ENCODE measurements at regions of chr2 and their contacts with region 1.

Region 1: GRCh38 chr2:174248187-174248997 is at the start of gene OLA1:
- DNase-seq: peak; percentile 89 to 98 (median 95)
- ATAC-seq: peak; percentile 97
- H3K4me3 ChIP-seq: peak within 1 kb of the TSS; percentile 79
- H3K4me3 Mint-ChIP-seq: peak within 1 kb of the TSS; percentile 90
- H3K27ac ChIP-seq: peak within 1 kb of the TSS; percentile 47 to 65
- H3K27ac Mint-ChIP-seq: peak within 1 kb of the TSS; percentile 73
- H3K4me1 ChIP-seq: peaks cover 21% of the 10 kb centered on the region
- H3K4me1 Mint-ChIP-seq: peaks cover 39% of the 10 kb centered on the region
- H3K27me3 ChIP-seq: no peaks in the 10 kb centered on the region
- H3K27me3 Mint-ChIP-seq: no peaks in the 10 kb centered on the region
- CTCF ChIP-seq: no peak
- total RNA-seq, gene OLA1: 38.1 to 40.5 TPM

Region 2: DNA sequence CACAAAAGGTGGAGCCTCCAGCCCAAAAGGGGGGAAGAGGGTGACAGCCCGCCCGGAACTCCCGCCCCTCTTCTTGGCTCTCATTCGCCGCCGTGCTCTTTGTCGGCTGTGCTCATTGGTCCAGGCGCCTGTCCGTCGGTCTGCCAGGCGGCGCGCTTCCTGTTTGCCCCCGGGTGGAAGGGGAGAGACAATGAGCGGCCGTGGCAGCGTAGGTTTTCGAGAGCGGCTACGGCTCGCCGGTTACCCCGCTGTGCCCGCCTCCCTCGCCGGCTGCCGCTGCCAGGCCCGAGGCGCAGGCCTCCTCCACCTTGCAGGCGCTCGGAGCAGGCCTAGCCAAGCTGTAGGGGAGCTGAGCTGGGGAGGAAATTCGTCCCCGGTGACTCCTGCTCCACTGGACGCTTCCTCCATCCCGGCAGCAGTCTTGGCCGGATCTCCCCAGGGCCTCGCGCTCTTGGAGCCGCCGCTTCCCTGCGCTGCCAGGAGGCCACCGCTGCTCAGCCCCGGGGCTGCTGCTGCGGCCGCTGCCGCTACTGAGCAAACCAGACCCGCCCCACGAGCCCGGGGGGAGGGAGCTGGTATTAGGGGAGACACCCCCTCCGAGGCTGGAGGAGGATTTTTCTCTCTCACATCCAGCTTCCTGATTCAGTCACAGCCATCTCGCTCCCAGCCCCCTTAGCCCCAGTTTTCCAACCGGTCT is 282.9 kb before region 1 on chr2 and contains the start of gene SP3:
- CTCF ChIA-PET with region 1: no interaction called
- POLR2A ChIA-PET with region 1: interaction called, 4 read pairs
- intact Hi-C with region 1: loop called in 1 of 2 experiments (anchors 5 kb)
- DNase-seq: peak; percentile 91 to 98 (median 95)
- ATAC-seq: peak; percentile 65
- H3K4me3 ChIP-seq: peak within 1 kb of the TSS; percentile 85
- H3K4me3 Mint-ChIP-seq: peak within 1 kb of the TSS; percentile 99
- H3K27ac ChIP-seq: peak within 1 kb of the TSS; percentile 95 to 99
- H3K27ac Mint-ChIP-seq: peak within 1 kb of the TSS; percentile 98
- H3K4me1 ChIP-seq: peaks cover 14% of the 10 kb centered on the region
- H3K4me1 Mint-ChIP-seq: peaks cover 45% of the 10 kb centered on the region
- H3K27me3 ChIP-seq: no peaks in the 10 kb centered on the region
- H3K27me3 Mint-ChIP-seq: no peaks in the 10 kb centered on the region
- CTCF ChIP-seq: no peak
- total RNA-seq, gene SP3: 159 to 166 TPM

Region 3: GRCh38 chr2:174326161-174327020 is 78.0 kb after region 1 on chr2:
- CTCF ChIA-PET with region 1: interaction called, 3 read pairs
- POLR2A ChIA-PET with region 1: interaction called, 4 read pairs
- intact Hi-C with region 1: loop called in 1 of 2 experiments (anchors 5 kb)
- DNase-seq: peak in 4 of 14 experiments; percentile 17 to 68 (median 49)
- ATAC-seq: peak; percentile 42
- H3K4me3 ChIP-seq: peak overlapping the region; percentile 47
- H3K4me3 Mint-ChIP-seq: peak overlapping the region; percentile 74
- H3K27ac ChIP-seq: no peak overlapping the region
- H3K27ac Mint-ChIP-seq: no peak overlapping the region
- H3K4me1 ChIP-seq: peaks cover 31% of the 10 kb centered on the region
- H3K4me1 Mint-ChIP-seq: peaks cover 34% of the 10 kb centered on the region
- H3K27me3 ChIP-seq: peaks cover 78 to 80% of the 10 kb centered on the region in 2 experiments
- H3K27me3 Mint-ChIP-seq: peaks cover 98% of the 10 kb centered on the region
- CTCF ChIP-seq: no peak

Region 4: DNA sequence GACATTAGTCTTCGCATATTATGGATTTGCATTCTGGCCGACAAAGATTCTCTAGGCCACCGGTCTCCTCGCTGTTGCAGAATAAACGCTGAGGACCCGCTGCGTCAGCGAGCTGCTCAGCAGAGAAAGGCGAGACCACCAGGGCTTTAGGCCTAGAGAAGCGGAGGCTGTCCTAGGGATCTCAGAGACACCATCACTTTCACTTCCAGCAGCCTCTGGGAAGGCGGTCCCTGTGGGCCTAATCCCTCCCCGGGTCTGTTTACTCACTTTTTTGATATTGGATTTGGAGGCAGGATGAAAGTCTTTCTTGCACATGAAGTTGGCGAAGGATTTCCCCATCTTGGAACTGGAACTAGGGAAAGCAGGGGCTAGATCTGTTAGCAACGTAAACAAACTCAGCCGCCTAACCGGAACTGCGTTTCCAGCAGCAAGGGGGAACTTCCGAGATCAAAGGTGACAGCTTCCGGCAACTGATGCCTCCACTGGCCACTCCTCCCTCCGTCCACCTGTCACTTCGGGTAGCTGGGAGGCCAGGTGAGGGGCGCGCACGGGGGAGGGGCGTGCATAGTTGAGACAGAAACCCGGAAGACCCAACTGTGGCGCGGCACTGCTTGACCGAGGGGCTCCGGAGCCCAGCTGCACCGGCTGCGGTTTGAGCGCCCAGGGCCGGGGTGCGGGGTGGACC is 147.0 kb after region 1 on chr2 and contains the start of gene SCRN3:
- CTCF ChIA-PET with region 1: no interaction called
- POLR2A ChIA-PET with region 1: no interaction called
- intact Hi-C with region 1: loop called in 1 of 2 experiments (anchors 5 kb)
- DNase-seq: peak; percentile 58 to 92 (median 71)
- ATAC-seq: peak; percentile 86
- H3K4me3 ChIP-seq: peak within 1 kb of the TSS; percentile 88
- H3K4me3 Mint-ChIP-seq: peak within 1 kb of the TSS; percentile 100
- H3K27ac ChIP-seq: peak within 1 kb of the TSS; percentile 92 to 96
- H3K27ac Mint-ChIP-seq: peak within 1 kb of the TSS; percentile 100
- H3K4me1 ChIP-seq: peaks cover 10% of the 10 kb centered on the region
- H3K4me1 Mint-ChIP-seq: peaks cover 68% of the 10 kb centered on the region
- H3K27me3 ChIP-seq: no peaks in the 10 kb centered on the region
- H3K27me3 Mint-ChIP-seq: no peaks in the 10 kb centered on the region
- CTCF ChIP-seq: no peak
- total RNA-seq, gene SCRN3: 7.6 to 7.9 TPM

Region 5: GRCh38 chr2:174487108-174487819 is 238.9 kb after region 1 on chr2:
- CTCF ChIA-PET with region 1: no interaction called
- POLR2A ChIA-PET with region 1: no interaction called
- intact Hi-C with region 1: loop called in 1 of 2 experiments (anchors 5 kb)
- DNase-seq: peak; percentile 80 to 100 (median 98)
- ATAC-seq: peak; percentile 78
- H3K4me3 ChIP-seq: peak overlapping the region; percentile 83
- H3K4me3 Mint-ChIP-seq: peak overlapping the region; percentile 94
- H3K27ac ChIP-seq: peak overlapping the region; percentile 49 to 75
- H3K27ac Mint-ChIP-seq: peak overlapping the region; percentile 95
- H3K4me1 ChIP-seq: peaks cover 33% of the 10 kb centered on the region
- H3K4me1 Mint-ChIP-seq: peaks cover 82% of the 10 kb centered on the region
- H3K27me3 ChIP-seq: no peaks in the 10 kb centered on the region
- H3K27me3 Mint-ChIP-seq: no peaks in the 10 kb centered on the region
- CTCF ChIP-seq: no peak

Region 6: GRCh38 chr2:175167792-175168563 is 919.6 kb after region 1 on chr2 and contains the start of gene ATF2:
- CTCF ChIA-PET with region 1: no interaction called
- POLR2A ChIA-PET with region 1: no interaction called
- intact Hi-C with region 1: loop called in 1 of 2 experiments (anchors 10 kb)
- DNase-seq: peak; percentile 94 to 100 (median 96)
- ATAC-seq: peak; percentile 90
- H3K4me3 ChIP-seq: peak within 1 kb of the TSS; percentile 90
- H3K4me3 Mint-ChIP-seq: peak within 1 kb of the TSS; percentile 91
- H3K27ac ChIP-seq: peak within 1 kb of the TSS; percentile 84 to 90
- H3K27ac Mint-ChIP-seq: peak within 1 kb of the TSS; percentile 90
- H3K4me1 ChIP-seq: peaks cover 18% of the 10 kb centered on the region
- H3K4me1 Mint-ChIP-seq: peaks cover 66% of the 10 kb centered on the region
- H3K27me3 ChIP-seq: no peaks in the 10 kb centered on the region
- H3K27me3 Mint-ChIP-seq: no peaks in the 10 kb centered on the region
- CTCF ChIP-seq: no peak
- total RNA-seq, gene ATF2: 44.7 to 44.8 TPM

Measured in CD4-positive, alpha-beta T cell (primary cell).